Endothelial cell of umbilical vein (primary cell): ENCODE measurements at regions of chr19 and their contacts with region 1.

Region 1: DNA sequence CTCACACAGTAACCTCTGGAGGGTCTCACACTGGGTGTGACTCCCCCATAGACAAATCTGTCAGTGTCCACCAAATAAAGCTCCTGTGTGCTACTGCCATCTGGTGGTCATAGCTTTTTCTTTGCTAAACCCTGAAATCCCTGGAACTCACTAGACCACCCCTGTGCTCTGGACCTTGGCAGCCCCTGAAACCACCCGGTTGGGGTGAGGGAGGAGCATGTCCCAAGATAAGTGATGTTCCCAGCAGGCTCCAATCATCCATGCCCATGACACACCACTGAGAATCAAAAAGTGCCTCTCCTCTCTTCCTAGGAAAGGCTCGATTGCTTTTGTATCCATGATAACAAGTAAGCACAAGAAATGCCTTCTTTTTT is 6.5 kb upstream of the HSD17B14 start:
- DNase-seq: peak; percentile 62
- H3K4me3 ChIP-seq: no peak overlapping the region
- H3K27ac ChIP-seq: no peak overlapping the region
- H3K4me1 ChIP-seq: no peaks in the 10 kb centered on the region
- H3K27me3 ChIP-seq: no peaks in the 10 kb centered on the region
- CTCF ChIP-seq: peak; percentile 73 to 79
- POLR2A ChIP-seq: no peak

Region 2: DNA sequence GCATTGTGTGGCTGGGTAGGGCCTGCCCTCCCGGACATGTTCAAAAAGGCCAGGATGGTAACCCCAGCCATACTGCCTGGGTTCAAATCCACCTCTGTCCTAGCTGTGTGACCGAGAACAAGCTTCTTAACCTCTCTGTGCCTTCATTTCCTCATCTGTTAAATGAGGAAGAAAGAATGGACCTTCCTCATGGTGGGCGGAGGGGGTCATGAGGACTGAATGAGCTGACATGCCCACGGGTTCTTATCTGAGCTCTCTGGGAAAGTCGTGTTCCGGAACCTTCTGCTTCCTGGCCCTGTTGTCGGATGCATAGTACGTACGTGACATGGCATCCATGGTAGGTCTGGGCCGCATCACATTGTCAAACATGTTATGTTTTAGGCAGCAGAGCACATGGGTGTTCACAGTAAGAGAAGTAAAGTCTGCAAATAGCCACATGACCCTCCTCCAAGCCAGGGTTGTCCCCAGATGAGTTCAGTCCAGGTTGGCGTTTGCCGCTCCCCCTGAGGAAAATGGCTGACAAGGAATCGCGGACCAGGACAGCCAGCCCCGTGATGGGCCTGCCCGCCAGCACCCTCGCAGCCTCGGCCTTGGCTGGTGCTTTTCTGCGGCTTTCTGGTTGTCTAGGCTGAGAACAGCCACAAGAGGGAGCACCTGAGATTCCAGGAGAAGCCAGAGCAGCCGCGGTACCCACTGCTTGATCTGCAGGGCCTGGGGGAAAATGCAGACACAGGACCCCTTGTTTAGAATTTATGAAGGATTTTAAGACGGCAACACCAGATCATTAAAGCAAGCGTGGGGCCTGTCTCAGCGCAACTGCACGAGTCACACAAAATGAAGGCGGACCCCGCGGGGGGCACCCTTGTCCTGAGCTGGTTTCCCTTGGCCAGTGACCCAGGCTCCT is 167.6 kb before region 1 on chr19:
- CTCF ChIA-PET with region 1: interaction called, 17 read pairs
- POLR2A ChIA-PET with region 1: interaction called, 3 read pairs
- dilution Hi-C with region 1: no loop called
- intact Hi-C with region 1: loop called (anchors 1 kb)
- DNase-seq: peak; percentile 88
- H3K4me3 ChIP-seq: no peak overlapping the region
- H3K27ac ChIP-seq: no peak overlapping the region
- H3K4me1 ChIP-seq: no peaks in the 10 kb centered on the region
- H3K27me3 ChIP-seq: no peaks in the 10 kb centered on the region
- CTCF ChIP-seq: peak; percentile 86 to 92
- POLR2A ChIP-seq: no peak

Region 3: GRCh38 chr19:48780631-48781391 is 62.0 kb before region 1 on chr19:
- CTCF ChIA-PET with region 1: interaction called, 78 read pairs
- POLR2A ChIA-PET with region 1: no interaction called
- dilution Hi-C with region 1: no loop called
- intact Hi-C with region 1: no loop called
- DNase-seq: peak; percentile 43
- H3K4me3 ChIP-seq: no peak overlapping the region
- H3K27ac ChIP-seq: peak overlapping the region; percentile 53
- H3K4me1 ChIP-seq: peaks cover 9% of the 10 kb centered on the region
- H3K27me3 ChIP-seq: no peaks in the 10 kb centered on the region
- CTCF ChIP-seq: no peak
- POLR2A ChIP-seq: no peak

Region 4: DNA sequence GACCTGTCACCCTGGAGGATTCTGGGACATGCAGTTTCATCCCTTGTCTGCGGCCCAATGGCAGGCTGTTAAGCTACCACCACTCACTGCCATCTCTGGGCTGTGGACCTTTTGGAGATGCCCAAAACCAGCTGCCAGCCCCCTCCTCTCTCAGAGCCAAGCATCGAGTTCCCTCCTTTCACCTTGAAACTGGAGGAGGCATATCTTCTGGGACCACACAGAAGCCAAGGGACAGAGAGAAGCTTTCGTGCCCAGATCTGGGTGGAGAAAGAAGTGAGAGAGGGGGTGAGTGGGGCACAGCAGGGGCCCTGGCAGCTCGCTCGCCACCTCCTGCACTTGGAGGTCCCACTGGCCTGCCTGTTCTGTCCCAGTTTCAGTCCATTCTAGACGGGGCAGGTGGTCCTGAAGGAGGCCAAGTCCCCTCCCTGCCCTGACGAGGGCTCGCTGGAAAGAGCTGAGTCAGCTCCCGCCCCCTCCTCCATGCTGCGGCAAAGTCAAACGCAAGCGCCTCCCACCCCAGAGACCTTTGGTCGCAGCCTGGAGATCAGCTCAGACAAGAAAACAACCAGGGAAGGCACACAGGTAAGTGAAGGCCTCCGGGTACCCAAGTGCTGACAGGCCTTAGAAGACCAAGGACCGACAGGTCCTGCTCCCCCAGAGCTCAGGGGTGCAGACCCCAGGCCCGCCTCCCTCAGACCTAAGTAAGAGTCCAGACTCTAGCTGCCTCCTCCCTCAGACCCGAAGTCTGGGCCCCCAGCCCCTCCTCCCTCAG is 35.8 kb before region 1 on chr19:
- CTCF ChIA-PET with region 1: interaction called, 12 read pairs
- POLR2A ChIA-PET with region 1: no interaction called
- dilution Hi-C with region 1: no loop called
- intact Hi-C with region 1: no loop called
- DNase-seq: no peak
- H3K4me3 ChIP-seq: no peak overlapping the region
- H3K27ac ChIP-seq: no peak overlapping the region
- H3K4me1 ChIP-seq: peaks cover 7% of the 10 kb centered on the region
- H3K27me3 ChIP-seq: no peaks in the 10 kb centered on the region
- CTCF ChIP-seq: no peak
- POLR2A ChIP-seq: no peak

Region 5: GRCh38 chr19:48856921-48857320 is 14.1 kb after region 1 on chr19:
- CTCF ChIA-PET with region 1: interaction called, 47 read pairs
- POLR2A ChIA-PET with region 1: no interaction called
- dilution Hi-C with region 1: no loop called
- intact Hi-C with region 1: no loop called
- DNase-seq: no peak
- H3K4me3 ChIP-seq: no peak overlapping the region
- H3K27ac ChIP-seq: no peak overlapping the region
- H3K4me1 ChIP-seq: no peaks in the 10 kb centered on the region
- H3K27me3 ChIP-seq: no peaks in the 10 kb centered on the region
- CTCF ChIP-seq: no peak
- POLR2A ChIP-seq: no peak

Region 6: DNA sequence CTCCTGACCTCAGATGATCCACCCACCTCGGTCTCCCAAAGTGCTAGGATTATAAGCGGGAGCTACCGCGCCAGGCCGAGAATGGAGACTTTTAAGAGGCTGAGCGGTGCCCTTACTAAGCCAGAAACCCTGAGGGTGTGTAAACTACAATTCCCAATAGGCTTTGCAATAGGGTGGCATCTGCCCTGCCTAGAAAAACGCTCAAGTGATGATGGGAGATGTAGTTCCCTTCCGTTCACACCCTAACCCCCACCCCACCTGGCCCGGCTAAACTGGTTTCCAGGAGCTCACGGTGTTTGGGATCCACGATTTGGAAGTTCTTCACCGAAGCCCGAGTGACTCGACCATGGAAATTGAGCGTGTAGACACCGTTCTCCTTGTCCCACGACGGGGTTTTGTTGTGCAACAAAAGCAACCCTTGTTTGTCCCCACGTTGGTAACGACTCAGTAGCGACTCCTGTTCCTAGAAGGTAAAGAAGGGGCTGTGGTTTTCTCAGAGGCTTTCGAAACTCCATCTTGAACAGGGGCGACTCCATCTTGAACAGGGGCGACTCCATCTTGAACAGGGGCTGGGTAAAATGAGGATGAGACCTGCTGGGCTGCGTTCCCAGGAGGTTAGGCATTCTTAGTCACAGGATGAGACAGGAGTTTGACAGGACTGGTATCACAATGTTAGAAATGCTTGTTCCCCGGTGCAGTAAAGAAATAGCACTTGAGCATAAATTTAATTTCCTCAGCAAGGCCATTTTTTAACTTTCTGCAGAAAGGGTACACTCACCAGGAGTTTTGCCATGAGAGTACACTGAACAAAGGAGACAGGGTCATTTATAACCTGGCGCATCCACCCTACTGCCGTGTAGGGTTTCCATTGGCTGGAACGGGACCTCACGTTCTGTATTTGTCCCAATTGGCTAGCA is 39.2 kb after region 1 on chr19:
- CTCF ChIA-PET with region 1: interaction called, 7 read pairs
- POLR2A ChIA-PET with region 1: interaction called, 10 read pairs
- dilution Hi-C with region 1: no loop called
- intact Hi-C with region 1: no loop called
- DNase-seq: no peak
- H3K4me3 ChIP-seq: no peak overlapping the region
- H3K27ac ChIP-seq: no peak overlapping the region
- H3K4me1 ChIP-seq: peaks cover 6% of the 10 kb centered on the region
- H3K27me3 ChIP-seq: no peaks in the 10 kb centered on the region
- CTCF ChIP-seq: no peak
- POLR2A ChIP-seq: no peak

Region 7: GRCh38 chr19:50401605-50402450 is 1559.1 kb after region 1 on chr19:
- CTCF ChIA-PET with region 1: no interaction called
- POLR2A ChIA-PET with region 1: no interaction called
- dilution Hi-C with region 1: no loop called
- intact Hi-C with region 1: no loop called
- DNase-seq: no peak
- H3K4me3 ChIP-seq: no peak overlapping the region
- H3K27ac ChIP-seq: no peak overlapping the region
- H3K4me1 ChIP-seq: no peaks in the 10 kb centered on the region
- H3K27me3 ChIP-seq: no peaks in the 10 kb centered on the region
- CTCF ChIP-seq: no peak
- POLR2A ChIP-seq: no peak